ENCODE measurements at regions of chr7 and their contacts with region 1.

Region 1: DNA sequence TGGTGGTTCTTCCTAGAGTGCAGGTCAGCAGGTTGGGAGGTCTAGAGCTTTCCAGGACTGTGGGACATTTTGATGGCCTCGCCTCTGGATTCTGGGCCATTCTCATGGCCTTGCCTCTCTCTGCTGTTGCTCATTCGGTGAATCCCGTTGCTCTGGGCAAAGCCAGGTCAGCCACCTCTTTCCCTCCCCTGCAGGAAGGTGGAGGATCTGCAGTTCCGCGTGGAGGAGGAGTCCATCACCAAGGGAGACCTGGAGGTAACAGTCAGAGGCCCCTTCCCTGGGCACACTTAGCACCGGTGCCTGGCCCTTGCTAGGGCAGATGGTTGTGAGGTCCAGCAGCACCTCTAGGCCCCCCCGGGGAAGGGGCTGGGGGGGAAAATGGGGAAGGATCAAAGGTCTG is 74.9 kb downstream of the CLIP2 start:
- DNase-seq: no peak

Region 2: GRCh38 chr7:74183613-74184450 is 180.2 kb before region 1 on chr7:
- intact Hi-C with region 1: no loop called
- DNase-seq: peak in 1 of 42 donors; percentile 26

Region 3: DNA sequence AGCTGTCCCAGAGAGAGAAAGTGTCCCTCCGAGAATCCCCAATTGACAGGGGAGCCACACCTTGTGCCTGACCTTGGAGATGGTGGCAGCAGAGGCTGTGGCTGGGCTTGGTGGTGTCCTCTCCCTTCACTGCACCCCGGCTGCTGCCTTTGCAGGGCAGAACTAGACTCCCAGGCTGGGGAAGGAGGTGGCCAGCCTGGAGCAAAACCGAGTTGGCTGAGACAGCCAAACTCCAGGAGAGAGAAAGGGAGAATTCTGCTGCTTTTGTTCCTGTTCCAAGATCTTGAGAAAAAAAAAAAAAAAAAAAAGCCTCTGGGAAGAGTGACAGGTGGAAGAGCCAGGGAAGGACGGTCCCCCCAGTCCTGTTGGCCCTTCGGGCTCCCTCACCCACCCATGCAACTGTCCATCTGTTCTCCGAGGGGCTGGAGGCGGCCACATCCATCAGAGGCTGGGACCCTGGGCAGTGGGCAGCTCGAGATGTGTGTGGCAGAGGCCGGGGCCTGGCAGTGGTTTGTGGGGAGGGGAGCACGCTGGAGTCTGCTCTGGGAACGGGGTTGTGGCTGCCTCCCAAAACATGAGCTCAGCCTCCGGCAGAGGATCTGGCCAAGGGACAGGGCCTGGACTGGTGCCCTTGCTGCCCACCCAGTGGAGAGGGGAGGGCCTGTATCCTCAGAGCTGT is 39.4 kb before region 1 on chr7:
- intact Hi-C with region 1: loop called (anchors 5 kb)
- DNase-seq: peak; percentile 62 to 92 (median 79)